Activated CD4-positive, alpha-beta memory T cell treated with anti-CD3 and anti-CD28 coated beads for 36 hours (primary cell): ENCODE measurements at regions of chr22 and their contacts with region 1.

Region 1: DNA sequence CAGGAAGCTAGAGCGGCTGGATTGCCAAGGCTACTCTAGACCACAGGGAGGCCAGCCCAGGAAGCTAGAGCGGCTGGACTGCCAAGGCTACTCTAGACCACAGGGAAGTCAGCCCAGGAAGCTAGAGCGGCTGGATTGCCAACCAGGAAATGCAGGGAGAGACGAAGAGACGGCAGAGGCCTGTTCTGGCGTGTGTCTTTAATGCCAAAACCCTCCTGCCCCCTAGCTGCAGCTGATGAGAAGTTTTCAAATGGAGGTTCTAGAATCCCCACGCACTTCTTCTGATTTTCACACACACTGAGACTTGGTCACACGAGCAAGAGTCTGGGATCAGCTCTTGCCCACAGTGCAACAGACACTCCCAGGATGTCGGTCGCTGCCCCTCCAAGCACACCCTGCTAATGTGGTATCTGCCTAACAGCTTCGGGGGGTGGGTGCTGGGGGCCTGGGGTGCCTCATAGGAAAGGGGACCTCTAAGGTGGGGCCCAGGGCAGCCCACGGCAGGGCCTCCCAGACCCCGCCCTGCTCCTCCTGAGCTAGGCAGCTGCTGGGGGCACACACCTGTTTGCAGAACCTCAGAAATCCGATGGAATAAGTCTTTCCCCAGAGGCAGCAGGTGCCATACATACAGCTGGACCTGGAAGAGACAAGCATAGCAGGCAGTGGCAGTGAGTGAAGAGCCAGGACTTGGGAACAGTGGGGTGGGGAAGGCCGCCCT is 28.5 kb downstream of the MAFF start:
- DNase-seq: peak; percentile 66
- H3K4me3 Mint-ChIP-seq: no peak overlapping the region
- H3K27ac Mint-ChIP-seq: no peak overlapping the region
- H3K4me1 Mint-ChIP-seq: peaks cover 3% of the 10 kb centered on the region
- H3K27me3 Mint-ChIP-seq: no peaks in the 10 kb centered on the region

Region 2: GRCh38 chr22:37643225-37643847 is 586.9 kb before region 1 on chr22:
- CTCF ChIA-PET with region 1: no interaction called
- POLR2A ChIA-PET with region 1: no interaction called
- intact Hi-C with region 1: no loop called
- DNase-seq: peak; percentile 91
- H3K4me3 Mint-ChIP-seq: peak overlapping the region; percentile 29
- H3K27ac Mint-ChIP-seq: peak overlapping the region; percentile 76
- H3K4me1 Mint-ChIP-seq: peaks cover 32% of the 10 kb centered on the region
- H3K27me3 Mint-ChIP-seq: no peaks in the 10 kb centered on the region

Region 3: GRCh38 chr22:38104084-38104483 is 126.2 kb before region 1 on chr22:
- CTCF ChIA-PET with region 1: interaction called, 7 read pairs
- POLR2A ChIA-PET with region 1: no interaction called
- intact Hi-C with region 1: loop called (anchors 2 kb)
- DNase-seq: no peak
- H3K4me3 Mint-ChIP-seq: no peak overlapping the region
- H3K27ac Mint-ChIP-seq: no peak overlapping the region
- H3K4me1 Mint-ChIP-seq: no peaks in the 10 kb centered on the region
- H3K27me3 Mint-ChIP-seq: no peaks in the 10 kb centered on the region

Region 4: GRCh38 chr22:38114484-38115398 is 115.5 kb before region 1 on chr22:
- CTCF ChIA-PET with region 1: interaction called, 25 read pairs
- POLR2A ChIA-PET with region 1: no interaction called
- intact Hi-C with region 1: loop called (anchors 1 kb)
- DNase-seq: peak; percentile 85
- H3K4me3 Mint-ChIP-seq: no peak overlapping the region
- H3K27ac Mint-ChIP-seq: no peak overlapping the region
- H3K4me1 Mint-ChIP-seq: peaks cover 3% of the 10 kb centered on the region
- H3K27me3 Mint-ChIP-seq: no peaks in the 10 kb centered on the region

Region 5: GRCh38 chr22:38442967-38443627 is 212.8 kb after region 1 on chr22:
- CTCF ChIA-PET with region 1: no interaction called
- POLR2A ChIA-PET with region 1: no interaction called
- intact Hi-C with region 1: no loop called
- DNase-seq: no peak
- H3K4me3 Mint-ChIP-seq: no peak overlapping the region
- H3K27ac Mint-ChIP-seq: no peak overlapping the region
- H3K4me1 Mint-ChIP-seq: no peaks in the 10 kb centered on the region
- H3K27me3 Mint-ChIP-seq: peaks cover 2% of the 10 kb centered on the region